Gastrocnemius medialis (tissue), 4 donors: ENCODE measurements at regions of chr14 and their contacts with region 1.

Region 1: GRCh38 chr14:69441948-69442347 is 42.6 kb upstream of the PLEKHD1 start:
- DNase-seq: no peak
- ATAC-seq: no peak
- H3K4me3 ChIP-seq: no peak overlapping the region
- H3K27ac ChIP-seq: no peak overlapping the region
- H3K4me1 ChIP-seq: no peaks in the 10 kb centered on the region
- H3K27me3 ChIP-seq: no peaks in the 10 kb centered on the region
- CTCF ChIP-seq: no peak
- POLR2A ChIP-seq: no peak

Region 2: DNA sequence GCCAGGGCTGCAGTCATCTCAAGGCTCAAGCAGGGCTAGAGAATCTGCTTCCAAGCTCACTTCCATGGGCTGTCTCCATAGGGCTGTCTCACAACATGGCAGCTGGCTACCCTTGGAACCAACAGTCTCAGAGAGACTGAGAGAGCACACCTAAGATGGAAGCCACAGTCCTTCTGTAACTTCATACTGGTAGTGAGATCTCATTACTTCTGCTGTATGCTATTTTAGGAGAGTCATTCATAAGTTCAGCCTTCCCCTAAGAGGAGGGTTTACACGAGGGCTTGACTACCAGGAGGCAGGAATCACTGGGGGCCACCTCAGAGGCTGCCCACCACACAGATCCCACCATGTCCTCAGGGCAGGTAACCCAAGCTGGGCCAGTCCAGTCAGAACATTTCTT is 73.6 kb before region 1 on chr14:
- in situ Hi-C with region 1: no loop called
- intact Hi-C with region 1: loop called (anchors 2 kb)
- DNase-seq: no peak
- ATAC-seq: peak in 1 of 2 donors; percentile 77
- H3K4me3 ChIP-seq: no peak overlapping the region
- H3K27ac ChIP-seq: no peak overlapping the region
- H3K4me1 ChIP-seq: no peaks in the 10 kb centered on the region
- H3K27me3 ChIP-seq: no peaks in the 10 kb centered on the region
- CTCF ChIP-seq: no peak
- POLR2A ChIP-seq: no peak